ENCODE measurements at regions of chr18 and their contacts with region 1.

Region 1: GRCh38 chr18:9614401-9615279 is at the start of gene PPP4R1:
- DNase-seq: peak; percentile 76
- H3K4me3 ChIP-seq: peak within 1 kb of the TSS; percentile 84
- H3K27ac ChIP-seq: peak within 1 kb of the TSS; percentile 87
- H3K4me1 ChIP-seq: peaks cover 13% of the 10 kb centered on the region
- H3K27me3 ChIP-seq: no peaks in the 10 kb centered on the region
- CTCF ChIP-seq: no peak
- total RNA-seq, gene PPP4R1: 65.2 and 67.4 TPM in 2 replicates

Region 2: GRCh38 chr18:9066817-9067306 is 547.8 kb before region 1 on chr18:
- CTCF ChIA-PET with region 1: no interaction called
- POLR2A ChIA-PET with region 1: no interaction called
- intact Hi-C with region 1: loop called (anchors 2 kb)
- DNase-seq: no peak
- H3K4me3 ChIP-seq: no peak overlapping the region
- H3K27ac ChIP-seq: no peak overlapping the region
- H3K4me1 ChIP-seq: no peaks in the 10 kb centered on the region
- H3K27me3 ChIP-seq: no peaks in the 10 kb centered on the region
- CTCF ChIP-seq: no peak

Region 3: GRCh38 chr18:9771261-9771976 is 156.8 kb after region 1 on chr18:
- CTCF ChIA-PET with region 1: no interaction called
- POLR2A ChIA-PET with region 1: no interaction called
- intact Hi-C with region 1: loop called (anchors 10 kb)
- DNase-seq: peak; percentile 66
- H3K4me3 ChIP-seq: no peak overlapping the region
- H3K27ac ChIP-seq: no peak overlapping the region
- H3K4me1 ChIP-seq: no peaks in the 10 kb centered on the region
- H3K27me3 ChIP-seq: no peaks in the 10 kb centered on the region
- CTCF ChIP-seq: peak; percentile 96

Region 4: GRCh38 chr18:9943311-9943710 is 328.7 kb after region 1 on chr18:
- CTCF ChIA-PET with region 1: no interaction called
- POLR2A ChIA-PET with region 1: no interaction called
- intact Hi-C with region 1: loop called (anchors 10 kb)
- DNase-seq: no peak
- H3K4me3 ChIP-seq: no peak overlapping the region
- H3K27ac ChIP-seq: no peak overlapping the region
- H3K4me1 ChIP-seq: peaks cover 4% of the 10 kb centered on the region
- H3K27me3 ChIP-seq: no peaks in the 10 kb centered on the region
- CTCF ChIP-seq: no peak